ENCODE measurements at regions of chr17 and their contacts with region 1.

Region 1: DNA sequence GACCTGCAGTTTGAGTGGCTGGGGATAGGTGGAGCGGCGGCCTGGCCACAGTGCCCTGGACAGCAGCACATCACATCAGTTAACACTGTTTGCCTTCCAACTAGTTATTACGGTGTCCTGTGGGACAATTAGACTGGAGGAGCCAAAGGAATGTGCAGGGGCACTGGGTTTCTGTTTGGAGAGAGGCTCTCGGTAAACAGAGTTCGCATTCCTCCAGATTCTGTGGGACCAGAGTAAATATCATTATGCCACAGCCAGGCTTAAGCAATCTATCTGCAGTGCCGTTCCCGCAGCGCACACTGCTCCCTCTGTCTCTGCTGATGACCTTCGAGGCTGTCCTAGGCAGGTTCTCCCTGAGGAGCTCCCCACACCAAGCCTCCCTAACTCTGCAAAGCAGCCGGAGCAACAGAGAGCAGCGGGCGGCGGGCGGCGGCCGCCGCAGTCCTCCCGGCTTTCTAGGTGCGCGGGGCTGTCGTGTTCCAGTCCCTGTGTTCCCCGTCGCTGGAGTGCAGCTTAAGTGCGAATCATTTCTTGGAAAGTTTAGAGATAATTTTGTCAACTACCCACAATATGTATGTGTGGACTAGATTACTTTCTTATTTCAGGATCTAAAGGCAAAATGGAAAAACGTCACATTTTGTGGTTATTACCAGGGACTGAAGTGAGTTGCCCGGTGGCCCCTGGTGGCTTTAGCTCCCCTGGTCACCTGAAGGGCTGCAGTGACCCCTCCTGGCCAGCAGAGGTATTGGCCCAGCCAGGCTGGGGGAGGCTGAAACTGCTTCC is 43.2 kb downstream of the PGS1 start:
- DNase-seq: peak; percentile 78
- H3K27ac ChIP-seq: peak overlapping the region; percentile 46
- CTCF ChIP-seq: peak; percentile 99

Region 2: DNA sequence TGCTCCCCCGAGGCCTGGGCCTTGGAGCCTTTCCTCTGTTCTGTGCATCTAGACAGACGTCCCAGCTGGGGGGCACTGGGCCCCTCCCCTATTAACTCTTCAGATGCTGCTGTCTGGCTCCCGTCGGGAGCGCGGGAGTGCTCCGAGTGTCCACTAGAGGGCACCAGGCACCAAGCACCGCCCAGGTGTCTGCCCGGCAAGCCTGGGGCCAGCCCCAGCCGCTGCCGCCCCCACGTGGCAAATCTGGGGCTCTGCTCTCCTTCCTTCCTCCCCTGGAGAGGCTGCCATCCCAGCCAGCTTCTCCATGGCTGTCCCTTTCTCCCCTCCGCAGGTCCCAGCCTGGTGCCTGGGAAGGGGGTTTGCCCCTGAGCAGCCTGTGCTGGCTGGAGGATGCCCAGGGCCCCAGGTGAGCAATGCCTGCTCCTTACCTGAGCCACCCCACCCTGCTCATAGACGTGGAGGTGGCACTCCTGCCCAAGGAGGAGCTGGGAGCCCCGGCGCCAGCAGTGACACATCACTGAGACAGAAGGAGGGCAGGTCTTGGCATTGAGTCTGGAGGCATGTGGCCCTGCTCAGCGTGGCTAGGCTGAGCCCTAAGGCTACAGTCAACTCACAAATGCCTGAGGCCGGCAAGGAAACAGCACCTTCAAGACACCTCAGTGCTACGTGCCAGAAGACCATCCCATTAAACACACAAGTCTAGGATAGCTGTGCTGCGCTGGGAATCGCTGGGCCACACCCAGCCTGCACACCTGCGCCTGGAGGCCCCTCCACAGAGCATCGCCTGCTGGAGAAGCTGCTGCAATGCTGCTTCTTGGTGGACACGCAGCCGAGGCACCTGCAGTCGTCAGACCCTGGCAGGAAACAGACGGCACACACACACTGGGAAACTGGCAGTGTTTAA is 170.5 kb before region 1 on chr17:
- CTCF ChIA-PET with region 1: interaction called, 12 read pairs
- POLR2A ChIA-PET with region 1: no interaction called
- DNase-seq: peak; percentile 94
- H3K27ac ChIP-seq: peak overlapping the region; percentile 38
- CTCF ChIP-seq: peak; percentile 100

Region 3: GRCh38 chr17:78360371-78361224 is 61.1 kb before region 1 on chr17:
- CTCF ChIA-PET with region 1: interaction called, 78 read pairs
- POLR2A ChIA-PET with region 1: no interaction called
- DNase-seq: peak; percentile 91
- H3K27ac ChIP-seq: peak overlapping the region; percentile 80
- CTCF ChIP-seq: peak; percentile 96

Region 4: GRCh38 chr17:78365561-78366108 is 56.0 kb before region 1 on chr17:
- CTCF ChIA-PET with region 1: interaction called, 78 read pairs
- POLR2A ChIA-PET with region 1: no interaction called
- DNase-seq: no peak
- H3K27ac ChIP-seq: no peak overlapping the region
- CTCF ChIP-seq: no peak

Region 5: DNA sequence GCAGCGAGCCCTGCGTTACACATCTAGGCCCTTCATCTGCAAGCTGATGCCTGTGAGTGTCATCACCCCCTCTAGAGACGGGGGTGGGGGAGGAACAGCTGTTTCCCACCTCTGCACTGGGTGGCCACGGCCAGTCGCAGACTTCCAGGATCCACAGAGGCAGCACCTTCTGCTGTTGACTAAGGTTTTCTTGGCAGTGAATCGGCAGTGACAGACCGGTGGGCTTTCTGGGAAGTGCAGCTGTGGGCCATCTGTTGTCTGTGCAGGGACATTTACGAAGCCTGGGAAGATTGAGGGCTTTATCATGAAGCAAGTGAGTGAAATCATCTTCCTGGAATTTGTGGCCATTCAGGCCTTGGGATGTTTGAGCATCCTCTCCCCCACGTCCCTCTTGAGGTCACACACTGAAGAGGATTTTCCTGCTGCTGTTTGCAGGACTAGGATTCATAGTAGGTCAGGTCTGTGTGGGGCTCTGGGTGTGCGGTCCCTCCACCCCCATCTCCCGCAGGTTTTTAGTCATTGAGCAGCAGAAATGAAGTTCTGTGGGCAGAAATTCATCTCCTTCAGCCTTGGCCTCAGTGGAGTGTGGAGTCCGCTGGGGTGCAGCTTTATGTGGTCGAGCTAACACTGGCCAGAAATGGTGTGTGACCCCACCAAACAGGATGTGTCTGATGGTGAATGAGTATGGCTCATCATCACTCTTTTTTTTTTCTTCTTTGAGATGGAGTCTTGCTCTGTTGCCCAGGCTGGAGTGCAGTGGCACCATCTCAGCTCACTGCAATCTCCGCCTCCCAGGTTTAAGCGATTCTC is 31.2 kb before region 1 on chr17:
- CTCF ChIA-PET with region 1: interaction called, 11 read pairs
- POLR2A ChIA-PET with region 1: no interaction called
- DNase-seq: no peak
- H3K27ac ChIP-seq: peak overlapping the region; percentile 66
- CTCF ChIP-seq: no peak

Region 6: GRCh38 chr17:78497115-78497540 is 75.5 kb after region 1 on chr17:
- CTCF ChIA-PET with region 1: no interaction called
- POLR2A ChIA-PET with region 1: no interaction called
- DNase-seq: peak; percentile 83
- H3K27ac ChIP-seq: no peak overlapping the region
- CTCF ChIP-seq: peak; percentile 85